ENCODE measurements at regions of chr15 and their contacts with region 1.

Region 1: GRCh38 chr15:35168464-35168863 is 83.4 kb upstream of the NANOGP8 start:
- DNase-seq: no peak
- H3K4me3 ChIP-seq: no peak overlapping the region
- H3K27ac ChIP-seq: no peak overlapping the region
- H3K4me1 ChIP-seq: no peaks in the 10 kb centered on the region
- H3K27me3 ChIP-seq: no peaks in the 10 kb centered on the region
- CTCF ChIP-seq: no peak
- POLR2A ChIP-seq: no peak

Region 2: DNA sequence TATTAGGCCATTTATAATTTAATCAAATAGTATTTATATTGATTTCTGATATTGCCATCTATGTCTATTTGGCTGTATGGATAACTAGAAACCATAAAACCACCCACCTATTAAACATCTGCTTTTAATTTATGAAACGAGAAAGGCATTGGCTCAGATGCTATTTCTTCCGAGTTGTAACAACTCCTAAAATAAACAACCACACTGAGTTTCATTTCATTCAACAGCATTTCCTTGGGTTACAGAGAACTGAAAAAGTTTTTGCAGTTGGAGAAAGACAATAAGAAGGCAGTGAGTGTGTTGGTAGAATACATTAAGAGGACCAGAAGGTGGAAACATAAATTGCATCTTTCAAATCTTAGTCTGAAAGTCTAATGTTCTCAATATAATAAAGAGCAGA is 278.0 kb before region 1 on chr15:
- intact Hi-C with region 1: loop called (anchors 10 kb)
- DNase-seq: no peak
- H3K4me3 ChIP-seq: no peak overlapping the region
- H3K27ac ChIP-seq: no peak overlapping the region
- H3K4me1 ChIP-seq: no peaks in the 10 kb centered on the region
- H3K27me3 ChIP-seq: no peaks in the 10 kb centered on the region
- CTCF ChIP-seq: no peak
- POLR2A ChIP-seq: no peak

Region 3: GRCh38 chr15:35061825-35062737 is 106.4 kb before region 1 on chr15:
- intact Hi-C with region 1: no loop called
- DNase-seq: no peak
- H3K4me3 ChIP-seq: no peak overlapping the region
- H3K27ac ChIP-seq: no peak overlapping the region
- H3K4me1 ChIP-seq: no peaks in the 10 kb centered on the region
- H3K27me3 ChIP-seq: no peaks in the 10 kb centered on the region
- CTCF ChIP-seq: no peak
- POLR2A ChIP-seq: no peak

Region 4: GRCh38 chr15:35206060-35206675 is 37.7 kb after region 1 on chr15:
- intact Hi-C with region 1: no loop called
- DNase-seq: no peak
- H3K4me3 ChIP-seq: no peak overlapping the region
- H3K27ac ChIP-seq: no peak overlapping the region
- H3K4me1 ChIP-seq: no peaks in the 10 kb centered on the region
- H3K27me3 ChIP-seq: no peaks in the 10 kb centered on the region
- CTCF ChIP-seq: no peak
- POLR2A ChIP-seq: no peak

Measured in breast epithelium (tissue), 4 donors.